Right cardiac atrium (tissue), 5 donors: ENCODE measurements at regions of chr9 and their contacts with region 1.

Region 1: GRCh38 chr9:77598524-77598923 is 49.6 kb downstream of the GNA14 start:
- DNase-seq: peak in 2 of 3 donors; percentile 55 to 57
- ATAC-seq: peak; percentile 75 to 83
- H3K4me3 ChIP-seq: no peak overlapping the region
- H3K27ac ChIP-seq: peak overlapping the region; percentile 52
- H3K4me1 ChIP-seq: peaks cover 7% of the 10 kb centered on the region
- H3K27me3 ChIP-seq: no peaks in the 10 kb centered on the region

Region 2: GRCh38 chr9:77648234-77649120 is 50.0 kb after region 1 on chr9 and contains the start of gene GNA14:
- intact Hi-C with region 1: loop called in 1 of 4 experiments (anchors 10 kb)
- DNase-seq: peak; percentile 80 to 92 (median 90)
- ATAC-seq: peak; percentile 91 to 92
- H3K4me3 ChIP-seq: peak within 1 kb of the TSS; percentile 55
- H3K27ac ChIP-seq: peak within 1 kb of the TSS; percentile 11
- H3K4me1 ChIP-seq: no peaks in the 10 kb centered on the region
- H3K27me3 ChIP-seq: no peaks in the 10 kb centered on the region
- total RNA-seq, gene GNA14: 4.0 to 5.2 (median 4.4) TPM